ENCODE measurements at regions of chr6 and their contacts with region 1.

Region 1: DNA sequence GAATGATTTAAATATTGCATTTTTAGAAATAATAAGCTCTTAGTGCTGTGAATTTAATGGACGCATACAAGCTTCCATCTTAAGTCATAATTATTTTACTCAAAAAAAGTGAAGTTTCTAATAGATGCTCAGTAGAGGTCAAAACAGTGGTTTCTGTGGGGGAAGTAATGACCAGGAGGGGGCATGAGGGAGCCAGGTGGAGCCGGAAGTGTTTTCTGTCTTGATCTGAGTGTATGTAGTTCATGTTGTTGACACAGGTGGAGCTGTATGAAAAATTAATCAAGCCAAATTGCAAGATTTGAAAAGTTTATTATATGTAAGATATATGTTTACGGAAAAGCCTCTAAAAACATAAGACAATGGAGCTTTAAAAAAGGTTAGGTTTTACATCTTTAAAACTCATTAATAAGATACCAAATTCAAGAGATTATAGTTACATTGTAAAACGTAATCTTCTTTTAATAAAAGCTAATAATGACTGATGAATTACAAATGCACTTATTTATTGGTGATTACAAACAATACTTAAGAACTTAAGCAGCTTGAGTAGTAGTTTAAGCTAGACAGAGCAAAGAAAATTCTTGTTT is 68.0 kb downstream of the PLAGL1 start:
- DNase-seq: no peak
- H3K4me3 ChIP-seq: no peak overlapping the region
- CTCF ChIP-seq: peak; percentile 48

Region 2: GRCh38 chr6:143598466-143599080 is 341.5 kb before region 1 on chr6:
- CTCF ChIA-PET with region 1: no interaction called
- POLR2A ChIA-PET with region 1: no interaction called
- DNase-seq: no peak
- H3K4me3 ChIP-seq: no peak overlapping the region
- CTCF ChIP-seq: no peak

Region 3: DNA sequence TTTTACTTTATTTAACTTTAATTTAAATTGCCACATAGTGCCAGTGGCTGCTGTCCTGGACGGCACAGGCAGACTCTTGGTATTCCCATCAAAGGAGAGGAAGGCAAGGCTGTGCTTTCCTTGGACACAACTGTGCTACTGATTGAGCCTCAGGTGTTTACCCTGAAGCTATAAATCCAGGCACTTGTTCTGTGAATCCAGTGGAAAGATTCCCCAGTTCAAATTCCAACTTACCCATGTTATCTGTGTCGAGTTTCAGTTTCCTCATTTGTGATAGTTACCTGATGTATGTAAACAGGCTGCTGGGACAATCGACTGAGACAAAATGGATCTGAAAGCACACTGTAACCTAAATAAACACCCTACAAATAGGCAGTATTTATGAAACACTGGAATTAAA is 10.8 kb after region 1 on chr6:
- CTCF ChIA-PET with region 1: interaction called, 10 read pairs
- POLR2A ChIA-PET with region 1: no interaction called
- DNase-seq: no peak
- H3K4me3 ChIP-seq: no peak overlapping the region
- CTCF ChIP-seq: no peak